Caco-2 (cell line): ENCODE measurements at regions of chr12 and their contacts with region 1.

Region 1: DNA sequence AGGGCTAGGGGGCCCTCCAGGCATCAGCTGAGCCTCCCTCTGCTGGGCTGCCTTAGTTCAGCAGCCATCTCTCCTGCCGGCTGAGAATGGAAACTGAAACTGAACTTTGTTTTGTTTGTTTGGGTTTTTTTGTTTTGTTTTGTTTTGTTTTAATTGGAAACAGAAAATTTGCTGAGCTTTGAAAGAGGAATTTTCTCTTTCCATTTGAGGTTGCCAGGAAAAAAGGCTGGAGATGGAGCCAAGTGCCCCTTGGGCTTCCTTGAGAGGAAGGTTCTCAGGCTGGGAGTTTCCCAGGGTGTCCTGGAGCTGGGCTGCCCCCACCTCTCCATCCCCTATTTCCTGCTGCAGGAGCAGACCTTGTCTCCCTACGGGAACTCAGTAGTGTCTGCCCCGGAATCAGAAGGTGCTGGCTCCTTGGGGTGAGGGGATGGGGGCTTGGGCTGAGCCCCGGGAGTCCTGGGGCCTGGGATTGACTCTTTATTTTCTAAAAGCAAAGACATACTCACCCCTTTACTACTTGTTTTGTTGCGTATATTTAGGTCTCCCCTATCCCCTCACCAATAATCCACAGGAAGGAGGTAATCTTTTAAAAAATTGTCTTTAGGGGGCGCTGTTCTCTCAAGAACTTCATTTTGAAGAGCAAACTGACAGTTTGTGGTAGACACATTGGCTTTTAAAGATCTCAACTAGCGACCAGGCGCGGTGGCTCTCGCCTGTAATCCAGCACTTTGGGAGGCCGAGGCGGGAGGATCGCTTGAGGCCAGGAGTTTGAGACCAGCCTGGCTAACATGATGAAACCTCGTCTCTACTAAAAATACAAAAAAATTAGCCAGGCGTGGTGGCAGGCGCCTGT is 21.3 kb upstream of the OASL start:
- DNase-seq: peak in 1 of 2 experiments; percentile 42
- H3K4me3 ChIP-seq: no peak overlapping the region
- H3K4me3 Mint-ChIP-seq: no peak overlapping the region
- H3K27ac Mint-ChIP-seq: no peak overlapping the region
- H3K4me1 ChIP-seq: no peaks in the 10 kb centered on the region
- H3K4me1 Mint-ChIP-seq: no peaks in the 10 kb centered on the region
- H3K27me3 ChIP-seq: no peaks in the 10 kb centered on the region
- H3K27me3 Mint-ChIP-seq: no peaks in the 10 kb centered on the region
- CTCF ChIP-seq: peak; percentile 43 to 48

Region 2: GRCh38 chr12:121095544-121096198 is 35.3 kb after region 1 on chr12:
- CTCF ChIA-PET with region 1: interaction called, 4 read pairs
- POLR2A ChIA-PET with region 1: no interaction called
- intact Hi-C with region 1: loop called (anchors 1 kb)
- DNase-seq: peak; percentile 78 to 85
- H3K4me3 ChIP-seq: peak overlapping the region; percentile 46
- H3K4me3 Mint-ChIP-seq: peak overlapping the region; percentile 96
- H3K27ac Mint-ChIP-seq: peak overlapping the region; percentile 82
- H3K4me1 ChIP-seq: 0 out of 2 replicates have a peak, but pooled peaks cover 3% of the 10 kb centered on the region
- H3K4me1 Mint-ChIP-seq: peaks cover 9% of the 10 kb centered on the region
- H3K27me3 ChIP-seq: no peaks in the 10 kb centered on the region
- H3K27me3 Mint-ChIP-seq: no peaks in the 10 kb centered on the region
- CTCF ChIP-seq: peak; percentile 84 to 86

Region 3: GRCh38 chr12:121110211-121110940 is 50.0 kb after region 1 on chr12:
- CTCF ChIA-PET with region 1: interaction called, 3 read pairs
- POLR2A ChIA-PET with region 1: no interaction called
- intact Hi-C with region 1: loop called (anchors 1 kb)
- DNase-seq: peak; percentile 67 to 74
- H3K4me3 ChIP-seq: no peak overlapping the region
- H3K4me3 Mint-ChIP-seq: no peak overlapping the region
- H3K27ac Mint-ChIP-seq: no peak overlapping the region
- H3K4me1 ChIP-seq: no peaks in the 10 kb centered on the region
- H3K4me1 Mint-ChIP-seq: peaks cover 6% of the 10 kb centered on the region
- H3K27me3 ChIP-seq: no peaks in the 10 kb centered on the region
- H3K27me3 Mint-ChIP-seq: no peaks in the 10 kb centered on the region
- CTCF ChIP-seq: peak; percentile 84 to 94